Activated CD4-positive, alpha-beta T cell treated with anti-CD3 and anti-CD28 coated beads for 36 hours (primary cell): ENCODE measurements at regions of chr1 and their contacts with region 1.

Region 1: GRCh38 chr1:198734323-198735008 is 95.6 kb downstream of the PTPRC start:
- DNase-seq: no peak
- ATAC-seq: peak; percentile 85
- H3K4me3 Mint-ChIP-seq: peak overlapping the region; percentile 1
- H3K27ac Mint-ChIP-seq: peak overlapping the region; percentile 42
- H3K4me1 Mint-ChIP-seq: peaks cover 73% of the 10 kb centered on the region
- H3K27me3 Mint-ChIP-seq: no peaks in the 10 kb centered on the region

Region 2: GRCh38 chr1:198699167-198700015 is 35.1 kb before region 1 on chr1:
- CTCF ChIA-PET with region 1: interaction called, 4 read pairs
- POLR2A ChIA-PET with region 1: no interaction called
- intact Hi-C with region 1: loop called in 1 of 2 experiments (anchors 5 kb)
- DNase-seq: peak; percentile 90
- ATAC-seq: peak; percentile 80
- H3K4me3 Mint-ChIP-seq: peak overlapping the region; percentile 30
- H3K27ac Mint-ChIP-seq: peak overlapping the region; percentile 87
- H3K4me1 Mint-ChIP-seq: peaks cover 78% of the 10 kb centered on the region
- H3K27me3 Mint-ChIP-seq: no peaks in the 10 kb centered on the region

Region 3: DNA sequence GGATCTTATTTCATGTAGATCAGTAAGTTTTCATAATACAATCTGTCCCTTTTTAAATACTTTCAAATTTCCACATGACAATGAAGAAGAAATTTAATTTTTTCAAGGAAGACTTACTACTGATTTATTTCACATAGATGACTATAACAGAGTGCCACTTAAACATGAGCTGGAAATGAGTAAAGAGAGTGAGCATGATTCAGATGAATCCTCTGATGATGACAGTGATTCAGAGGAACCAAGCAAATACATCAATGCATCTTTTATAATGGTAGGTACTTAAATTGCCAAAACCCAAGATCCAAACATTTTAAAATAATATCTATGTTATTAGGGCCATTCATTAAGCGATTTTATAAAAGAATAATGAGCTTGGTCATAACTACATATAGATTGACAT is 14.8 kb after region 1 on chr1:
- CTCF ChIA-PET with region 1: interaction called, 4 read pairs
- POLR2A ChIA-PET with region 1: no interaction called
- intact Hi-C with region 1: loop called in 1 of 2 experiments (anchors 1 kb)
- DNase-seq: no peak
- ATAC-seq: peak; percentile 83
- H3K4me3 Mint-ChIP-seq: no peak overlapping the region
- H3K27ac Mint-ChIP-seq: peak overlapping the region; percentile 40
- H3K4me1 Mint-ChIP-seq: peaks cover 15% of the 10 kb centered on the region
- H3K27me3 Mint-ChIP-seq: no peaks in the 10 kb centered on the region